ENCODE measurements at regions of chr1 and their contacts with region 1.

Region 1: DNA sequence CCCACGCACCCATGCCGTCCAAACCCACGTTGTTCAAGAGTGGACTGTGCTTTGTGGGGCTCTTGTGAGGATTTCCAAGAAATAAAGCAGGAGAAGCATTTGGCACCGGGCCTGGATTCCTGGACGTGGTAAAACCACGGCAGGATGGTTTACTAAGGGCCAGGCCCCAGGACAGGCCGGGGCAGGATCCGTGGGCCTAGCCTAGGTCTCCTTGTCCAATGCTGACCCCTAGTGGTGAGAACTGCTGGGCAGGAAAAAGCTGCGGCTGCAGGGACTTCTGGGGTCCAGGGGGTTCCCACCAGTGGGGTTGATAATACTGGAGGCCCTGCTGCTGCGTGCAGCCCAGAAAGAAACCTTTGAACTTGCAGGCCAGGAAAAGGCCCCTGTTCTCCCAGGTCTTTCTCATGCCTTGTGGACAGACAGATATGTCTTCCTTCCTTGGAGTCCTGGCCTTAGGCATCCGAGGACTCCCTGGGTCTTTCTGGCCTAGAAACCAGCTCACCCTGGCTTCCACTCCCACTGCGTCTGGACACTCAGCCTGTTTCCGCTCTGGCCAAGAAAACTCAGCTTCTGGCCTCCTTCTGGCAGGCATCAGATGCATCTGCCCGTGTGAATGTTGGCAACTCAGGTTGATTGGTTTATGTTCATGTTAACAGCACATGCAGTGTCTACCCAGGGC is 106.9 kb upstream of the TMEM51 start:
- DNase-seq: peak; percentile 70 to 89
- H3K4me3 ChIP-seq: no peak overlapping the region
- H3K27ac ChIP-seq: no peak overlapping the region
- H3K4me1 ChIP-seq: peaks cover 0 to 6% (median 3%) of the 10 kb centered on the region in 4 donors
- H3K27me3 ChIP-seq: no peaks in the 10 kb centered on the region
- CTCF ChIP-seq: peak in 5 of 7 experiments; percentile 68 to 92 (median 79)
- EP300 ChIP-seq: no peak
- POLR2A ChIP-seq: no peak

Region 2: GRCh38 chr1:14782741-14783591 is 263.7 kb before region 1 on chr1:
- intact Hi-C with region 1: loop called (anchors 10 kb)
- DNase-seq: no peak
- H3K4me3 ChIP-seq: no peak overlapping the region
- H3K27ac ChIP-seq: no peak overlapping the region
- H3K4me1 ChIP-seq: no peaks in the 10 kb centered on the region
- H3K27me3 ChIP-seq: no peaks in the 10 kb centered on the region
- CTCF ChIP-seq: no peak
- EP300 ChIP-seq: no peak
- POLR2A ChIP-seq: no peak

Measured in stomach (tissue), 19 donors.